Dendritic cell treated with granulocyte-macrophage colony-stimulating factor and Interleukin-4, amounts not matched to agents 40 ng/mL and 50 ng/mL, for 4 days (primary cell): ENCODE measurements at regions of chr19 and their contacts with region 1.

Region 1: GRCh38 chr19:45423589-45424190 is at the start of gene ERCC1:
- H3K4me3 Mint-ChIP-seq: peak within 1 kb of the TSS; percentile 97
- H3K27ac Mint-ChIP-seq: peak within 1 kb of the TSS; percentile 94
- H3K4me1 Mint-ChIP-seq: peaks cover 73% of the 10 kb centered on the region
- H3K27me3 Mint-ChIP-seq: peaks cover 9% of the 10 kb centered on the region

Region 2: DNA sequence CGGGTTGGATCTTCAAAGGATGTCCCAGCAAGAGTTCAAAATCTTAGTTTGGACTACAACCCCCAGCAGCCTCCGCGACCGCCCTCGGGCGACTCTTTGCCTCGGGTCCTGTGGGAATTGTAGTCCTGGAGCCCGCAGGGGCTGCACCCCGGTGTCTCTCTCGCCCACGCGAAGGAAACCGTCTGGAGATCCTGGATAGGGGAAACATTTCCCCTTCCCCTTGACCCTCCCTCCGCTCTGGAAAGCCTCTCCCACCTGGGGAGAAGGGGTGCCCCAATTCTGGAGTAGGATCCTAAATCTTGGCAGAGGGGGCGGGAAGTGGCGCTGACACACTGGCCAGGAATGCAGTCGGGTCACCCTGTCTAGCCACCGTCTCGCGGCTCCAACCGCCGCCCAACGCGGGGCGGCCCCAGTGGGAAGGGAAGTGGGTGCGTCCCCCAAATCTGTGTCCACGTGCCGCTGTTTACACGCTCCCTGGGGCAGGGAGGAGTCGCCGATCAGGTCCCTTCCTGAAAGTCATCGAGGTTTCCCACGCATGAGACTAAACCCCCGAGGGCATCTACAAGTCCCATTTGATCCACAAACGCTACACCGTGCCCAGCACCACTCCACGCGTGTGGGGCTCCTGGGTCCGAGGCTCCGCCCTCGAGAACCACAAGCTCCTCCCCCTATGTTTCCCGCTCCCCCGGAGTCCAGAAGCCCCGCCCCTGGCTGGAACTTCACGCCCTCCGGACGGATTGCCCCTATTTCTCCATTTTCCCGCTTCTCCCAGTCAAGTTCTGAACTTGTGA is 18.1 kb before region 1 on chr19:
- intact Hi-C with region 1: loop called (anchors 1 kb)
- H3K4me3 Mint-ChIP-seq: peak overlapping the region; percentile 95
- H3K27ac Mint-ChIP-seq: peak overlapping the region; percentile 90
- H3K4me1 Mint-ChIP-seq: peaks cover 68% of the 10 kb centered on the region
- H3K27me3 Mint-ChIP-seq: peaks cover 36% of the 10 kb centered on the region

Region 3: GRCh38 chr19:45478454-45479238 is 55.0 kb after region 1 on chr19:
- intact Hi-C with region 1: loop called (anchors 1 kb)
- H3K4me3 Mint-ChIP-seq: peak overlapping the region; percentile 73
- H3K27ac Mint-ChIP-seq: peak overlapping the region; percentile 91
- H3K4me1 Mint-ChIP-seq: peaks cover 46% of the 10 kb centered on the region
- H3K27me3 Mint-ChIP-seq: peaks cover 48% of the 10 kb centered on the region